Heart right ventricle (tissue), 16 donors: ENCODE measurements at regions of chr3 and their contacts with region 1.

Region 1: DNA sequence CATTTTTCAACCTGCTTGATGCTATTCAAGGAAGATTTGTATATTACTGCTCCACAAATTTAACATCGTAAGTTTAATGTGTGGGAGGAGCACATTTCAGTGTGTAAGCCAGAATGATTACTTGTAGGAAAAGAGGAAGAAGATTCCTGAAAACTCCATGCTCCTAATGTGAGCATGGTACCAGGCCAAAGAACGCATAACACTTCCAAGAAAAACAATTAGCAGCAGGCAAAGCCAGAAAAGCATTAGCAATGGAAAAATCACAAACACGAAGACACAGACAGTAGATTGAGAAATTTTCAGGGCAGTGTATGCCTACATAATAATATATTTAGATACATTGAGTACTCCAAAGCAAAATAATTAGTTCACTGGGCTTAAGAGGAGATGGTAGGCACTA is 96.6 kb upstream of the CBLB start:
- DNase-seq: peak in 1 of 2 donors; percentile 22
- ATAC-seq: peak in 6 of 8 donors; percentile 34 to 76 (median 62)
- H3K4me3 ChIP-seq: no peak overlapping the region
- H3K27ac ChIP-seq: no peak overlapping the region
- H3K4me1 ChIP-seq: peaks cover 0 to 20% (median 10%) of the 10 kb centered on the region in 9 donors
- H3K27me3 ChIP-seq: no peaks in the 10 kb centered on the region
- CTCF ChIP-seq: no peak

Region 2: GRCh38 chr3:106130384-106131198 is 165.2 kb after region 1 on chr3:
- intact Hi-C with region 1: loop called in 1 of 10 experiments (anchors 10 kb)
- DNase-seq: peak in 1 of 2 donors; percentile 34
- ATAC-seq: peak in 7 of 8 donors; percentile 43 to 82 (median 61)
- H3K4me3 ChIP-seq: no peak overlapping the region
- H3K27ac ChIP-seq: peak overlapping the region in 1 of 10 donors; percentile 21
- H3K4me1 ChIP-seq: peaks cover 0 to 37% (median 14%) of the 10 kb centered on the region in 9 donors
- H3K27me3 ChIP-seq: no peaks in the 10 kb centered on the region
- CTCF ChIP-seq: no peak